WTC11 (cell line): ENCODE measurements at regions of chr17 and their contacts with region 1.

Region 1: GRCh38 chr17:64689106-64689505 is 27.0 kb upstream of the SMURF2 start:
- DNase-seq: no peak
- ATAC-seq: no peak
- H3K4me3 Mint-ChIP-seq: no peak overlapping the region
- H3K27ac Mint-ChIP-seq: no peak overlapping the region
- H3K4me1 Mint-ChIP-seq: peaks cover 5% of the 10 kb centered on the region
- H3K27me3 Mint-ChIP-seq: no peaks in the 10 kb centered on the region
- CTCF ChIP-seq: no peak

Region 2: GRCh38 chr17:64747938-64748540 is 58.9 kb after region 1 on chr17:
- CTCF ChIA-PET with region 1: no interaction called
- POLR2A ChIA-PET with region 1: interaction called, 10 read pairs
- DNase-seq: no peak
- ATAC-seq: no peak
- H3K4me3 Mint-ChIP-seq: no peak overlapping the region
- H3K27ac Mint-ChIP-seq: no peak overlapping the region
- H3K4me1 Mint-ChIP-seq: no peaks in the 10 kb centered on the region
- H3K27me3 Mint-ChIP-seq: no peaks in the 10 kb centered on the region
- CTCF ChIP-seq: no peak